Activated B cell treated with CpG ODN at 0.5 μM for 24 hours (primary cell): ENCODE measurements at regions of chr19 and their contacts with region 1.

Region 1: GRCh38 chr19:56140583-56141416 is at the start of gene ZNF444:
- DNase-seq: peak; percentile 96
- ATAC-seq: peak; percentile 86
- H3K4me3 Mint-ChIP-seq: peak within 1 kb of the TSS; percentile 98
- H3K27ac Mint-ChIP-seq: peak within 1 kb of the TSS; percentile 99
- H3K4me1 Mint-ChIP-seq: peaks cover 29% of the 10 kb centered on the region
- H3K27me3 Mint-ChIP-seq: no peaks in the 10 kb centered on the region
- CTCF ChIP-seq: no peak
- total RNA-seq, gene ZNF444: 28.1 and 32.1 TPM in 2 replicates

Region 2: GRCh38 chr19:56105090-56105701 is 35.6 kb before region 1 on chr19:
- CTCF ChIA-PET with region 1: no interaction called
- POLR2A ChIA-PET with region 1: interaction called, 4 read pairs
- intact Hi-C with region 1: loop called (anchors 1 kb)
- DNase-seq: peak; percentile 49
- ATAC-seq: peak; percentile 68
- H3K4me3 Mint-ChIP-seq: peak overlapping the region; percentile 63
- H3K27ac Mint-ChIP-seq: peak overlapping the region; percentile 66
- H3K4me1 Mint-ChIP-seq: peaks cover 53% of the 10 kb centered on the region
- H3K27me3 Mint-ChIP-seq: no peaks in the 10 kb centered on the region
- CTCF ChIP-seq: no peak

Region 3: DNA sequence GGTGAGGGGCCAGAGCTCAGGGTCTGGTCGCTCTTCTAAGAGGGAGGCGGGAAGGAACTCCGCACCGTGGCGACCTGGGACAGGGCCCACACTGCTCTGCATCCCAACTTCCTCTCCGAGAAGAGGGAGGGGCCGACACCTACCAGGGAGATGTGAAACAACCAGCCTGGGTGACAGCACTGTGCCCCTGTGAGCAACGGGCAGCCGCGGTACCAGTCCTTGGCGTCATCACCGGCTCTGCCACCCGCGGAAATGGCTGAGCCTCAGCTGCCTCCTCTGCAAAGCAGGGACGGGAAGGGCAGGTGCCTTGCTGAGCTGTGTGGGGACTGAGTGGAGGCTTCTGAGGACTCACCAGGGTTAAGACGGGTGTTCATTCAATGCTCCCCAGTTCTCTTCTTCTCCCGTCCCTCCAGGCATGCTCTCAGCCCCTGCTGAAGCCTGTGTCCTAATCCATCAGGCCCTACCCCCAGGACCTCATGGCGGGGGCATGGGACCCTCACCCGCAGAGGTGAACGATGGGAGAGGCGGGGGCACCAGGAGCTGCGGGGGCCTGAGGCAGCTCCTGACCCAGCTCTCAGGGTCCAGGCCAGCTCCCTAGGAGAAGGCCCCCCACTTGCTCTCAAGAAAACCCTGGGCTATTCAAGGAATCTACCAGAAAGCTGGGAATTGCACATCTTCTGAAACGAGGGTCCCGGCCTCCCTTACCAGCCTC is 29.0 kb before region 1 on chr19:
- CTCF ChIA-PET with region 1: no interaction called
- POLR2A ChIA-PET with region 1: interaction called, 14 read pairs
- intact Hi-C with region 1: loop called (anchors 2 kb)
- DNase-seq: peak; percentile 61
- ATAC-seq: peak; percentile 96
- H3K4me3 Mint-ChIP-seq: peak overlapping the region; percentile 77
- H3K27ac Mint-ChIP-seq: peak overlapping the region; percentile 84
- H3K4me1 Mint-ChIP-seq: peaks cover 83% of the 10 kb centered on the region
- H3K27me3 Mint-ChIP-seq: no peaks in the 10 kb centered on the region
- CTCF ChIP-seq: no peak

Region 4: DNA sequence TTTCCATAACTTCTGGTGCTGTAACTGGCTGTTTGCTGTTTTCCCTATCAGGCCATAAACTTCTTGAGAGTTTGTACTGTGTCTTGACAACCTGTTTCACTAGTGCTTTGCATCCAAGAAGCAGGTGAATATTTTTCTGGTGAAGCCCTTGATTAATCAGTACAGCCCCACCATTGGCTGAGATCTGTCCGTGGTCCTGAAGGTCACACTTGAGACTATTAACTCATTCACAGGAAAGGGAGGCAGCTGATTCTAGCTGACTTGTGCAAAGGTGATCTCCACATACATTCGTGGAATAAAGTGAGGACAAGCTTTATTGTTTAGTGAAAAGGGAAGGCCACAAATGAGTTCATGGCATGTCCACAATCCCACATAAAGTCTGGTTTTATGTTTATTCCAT is 592.2 kb after region 1 on chr19:
- CTCF ChIA-PET with region 1: no interaction called
- POLR2A ChIA-PET with region 1: no interaction called
- intact Hi-C with region 1: no loop called
- DNase-seq: no peak
- ATAC-seq: no peak
- H3K4me3 Mint-ChIP-seq: no peak overlapping the region
- H3K27ac Mint-ChIP-seq: no peak overlapping the region
- H3K4me1 Mint-ChIP-seq: no peaks in the 10 kb centered on the region
- H3K27me3 Mint-ChIP-seq: no peaks in the 10 kb centered on the region
- CTCF ChIP-seq: no peak